Dendritic cell treated with granulocyte-macrophage colony-stimulating factor and Interleukin-4, amounts not matched to agents 40 ng/mL and 50 ng/mL, for 4 days (primary cell): ENCODE measurements at regions of chr3 and their contacts with region 1.

Region 1: GRCh38 chr3:188941103-188941502 is 230.7 kb upstream of the TPRG1 start:
- H3K4me3 Mint-ChIP-seq: no peak overlapping the region
- H3K27ac Mint-ChIP-seq: peak overlapping the region; percentile 11
- H3K4me1 Mint-ChIP-seq: peaks cover 77% of the 10 kb centered on the region
- H3K27me3 Mint-ChIP-seq: no peaks in the 10 kb centered on the region

Region 2: DNA sequence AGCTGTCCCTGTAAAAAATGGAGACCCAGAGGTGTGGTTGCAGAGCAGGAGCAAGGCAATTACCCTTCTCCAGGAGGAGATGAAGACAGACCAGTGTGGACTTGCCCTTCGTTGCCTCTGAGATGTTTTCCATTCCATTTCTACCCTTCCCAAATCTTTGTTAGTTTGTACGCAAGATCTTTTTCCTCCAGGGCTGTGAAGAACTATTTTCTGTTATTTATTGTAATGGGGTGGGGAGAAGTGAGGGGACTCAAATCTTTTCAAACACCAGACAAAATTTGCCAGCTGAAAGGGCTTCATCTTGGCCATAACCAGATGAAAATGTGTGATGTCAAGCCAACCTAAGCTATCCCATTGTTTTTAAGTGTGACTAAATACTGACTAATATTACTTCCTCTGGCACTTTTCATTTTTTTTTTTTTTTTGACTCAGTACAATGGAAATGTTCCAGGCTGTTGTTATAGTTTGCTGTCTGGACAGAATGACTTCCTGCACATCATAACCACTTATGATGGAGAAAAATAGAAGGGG is 40.6 kb before region 1 on chr3:
- intact Hi-C with region 1: no loop called
- H3K4me3 Mint-ChIP-seq: no peak overlapping the region
- H3K27ac Mint-ChIP-seq: peak overlapping the region; percentile 35
- H3K4me1 Mint-ChIP-seq: peaks cover 49% of the 10 kb centered on the region
- H3K27me3 Mint-ChIP-seq: no peaks in the 10 kb centered on the region

Region 3: DNA sequence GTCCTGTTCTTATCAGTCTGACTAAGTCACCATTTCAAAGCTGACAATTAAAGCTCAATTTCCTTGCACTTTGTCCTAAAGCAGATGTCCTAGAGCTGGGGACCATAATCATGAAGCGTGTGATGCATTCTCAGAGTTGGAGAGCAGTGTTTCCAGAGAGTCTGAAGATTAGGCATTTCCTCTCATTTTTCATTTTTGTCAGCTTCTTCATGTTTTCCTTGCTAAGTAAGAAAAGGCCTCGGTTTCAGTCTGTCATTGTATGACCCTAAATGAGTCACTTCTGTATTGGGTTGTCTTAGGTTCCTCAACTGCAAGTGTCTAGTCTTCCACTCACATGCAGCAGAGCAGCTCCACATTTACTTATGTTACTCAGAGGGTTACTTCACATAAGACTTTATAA is 26.6 kb before region 1 on chr3:
- intact Hi-C with region 1: loop called (anchors 2 kb)
- H3K4me3 Mint-ChIP-seq: no peak overlapping the region
- H3K27ac Mint-ChIP-seq: peak overlapping the region; percentile 91
- H3K4me1 Mint-ChIP-seq: peaks cover 68% of the 10 kb centered on the region
- H3K27me3 Mint-ChIP-seq: no peaks in the 10 kb centered on the region